Posterior cingulate gyrus (tissue), 11 donors: ENCODE measurements at regions of chr20 and their contacts with region 1.

Region 1: DNA sequence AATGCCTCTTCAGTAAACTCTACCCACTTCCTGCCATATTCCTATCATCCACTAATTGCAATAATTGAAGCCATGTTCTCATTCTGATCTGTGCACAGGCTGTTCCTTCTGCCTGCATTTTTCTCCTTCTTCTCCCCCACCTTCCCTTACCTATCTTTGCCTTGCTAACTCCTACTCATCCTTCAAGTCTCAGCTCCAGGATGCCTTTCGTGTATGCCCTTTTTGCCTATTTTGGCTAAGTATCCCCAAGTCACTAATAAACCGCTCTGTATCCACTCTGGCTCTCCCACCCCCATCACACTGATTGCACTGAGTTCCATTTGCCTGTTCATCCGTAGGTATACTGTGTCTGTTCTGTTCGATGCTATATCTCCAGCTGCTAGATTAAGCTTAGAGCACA is 6.3 kb upstream of the RPN2 start:
- DNase-seq: no peak

Region 2: DNA sequence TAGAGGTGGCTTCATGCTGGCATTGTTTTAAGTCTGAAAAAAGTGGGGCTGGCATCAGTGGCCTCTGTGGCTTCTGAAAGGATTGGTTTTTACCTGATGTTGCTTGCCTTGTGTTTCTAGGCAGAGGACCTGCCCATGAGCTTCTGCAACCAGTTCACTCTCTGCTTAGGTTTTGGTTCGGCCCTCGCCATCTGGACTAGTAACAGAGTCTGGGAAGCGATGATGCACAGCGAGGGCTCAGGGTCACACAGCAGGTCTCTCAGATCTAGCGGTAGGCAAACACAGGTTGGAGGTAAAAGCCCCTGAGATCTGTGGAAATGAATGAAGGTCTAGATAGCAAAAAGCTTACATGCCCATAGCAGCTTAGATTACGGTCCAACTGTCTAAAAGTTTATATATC is 70.3 kb before region 1 on chr20:
- intact Hi-C with region 1: loop called (anchors 5 kb)
- DNase-seq: no peak